ENCODE measurements at regions of chr10 and their contacts with region 1.

Region 1: GRCh38 chr10:46022978-46023702 is 7.3 kb downstream of the NCOA4 start:
- DNase-seq: peak; percentile 87 to 98 (median 92)
- ATAC-seq: peak; percentile 96
- H3K4me3 ChIP-seq: peak overlapping the region; percentile 62
- H3K27ac ChIP-seq: peak overlapping the region; percentile 79
- H3K4me1 ChIP-seq: peaks cover 31 to 72% of the 10 kb centered on the region in 2 experiments
- H3K27me3 ChIP-seq: no peaks in the 10 kb centered on the region
- CTCF ChIP-seq: peak; percentile 60 to 92 (median 83)
- EP300 ChIP-seq: 0 out of 2 replicates have a peak, but pooled peaks have one; percentile 8
- POLR2A ChIP-seq: peak; percentile 67
- RAD21 ChIP-seq: peak; percentile 77 to 86

Region 2: GRCh38 chr10:44589181-44589943 is 1433.8 kb before region 1 on chr10:
- CTCF ChIA-PET with region 1: no interaction called
- POLR2A ChIA-PET with region 1: no interaction called
- in situ Hi-C with region 1: no loop called
- intact Hi-C with region 1: no loop called
- DNase-seq: no peak
- ATAC-seq: no peak
- H3K4me3 ChIP-seq: no peak overlapping the region
- H3K27ac ChIP-seq: no peak overlapping the region
- H3K4me1 ChIP-seq: no peaks in the 10 kb centered on the region
- H3K27me3 ChIP-seq: peaks cover 0 to 49% of the 10 kb centered on the region in 2 experiments; a peak in 3 of 5 replicates
- CTCF ChIP-seq: no peak; a peak in 1 of 6 replicates
- EP300 ChIP-seq: no peak
- POLR2A ChIP-seq: no peak
- RAD21 ChIP-seq: no peak

Region 3: DNA sequence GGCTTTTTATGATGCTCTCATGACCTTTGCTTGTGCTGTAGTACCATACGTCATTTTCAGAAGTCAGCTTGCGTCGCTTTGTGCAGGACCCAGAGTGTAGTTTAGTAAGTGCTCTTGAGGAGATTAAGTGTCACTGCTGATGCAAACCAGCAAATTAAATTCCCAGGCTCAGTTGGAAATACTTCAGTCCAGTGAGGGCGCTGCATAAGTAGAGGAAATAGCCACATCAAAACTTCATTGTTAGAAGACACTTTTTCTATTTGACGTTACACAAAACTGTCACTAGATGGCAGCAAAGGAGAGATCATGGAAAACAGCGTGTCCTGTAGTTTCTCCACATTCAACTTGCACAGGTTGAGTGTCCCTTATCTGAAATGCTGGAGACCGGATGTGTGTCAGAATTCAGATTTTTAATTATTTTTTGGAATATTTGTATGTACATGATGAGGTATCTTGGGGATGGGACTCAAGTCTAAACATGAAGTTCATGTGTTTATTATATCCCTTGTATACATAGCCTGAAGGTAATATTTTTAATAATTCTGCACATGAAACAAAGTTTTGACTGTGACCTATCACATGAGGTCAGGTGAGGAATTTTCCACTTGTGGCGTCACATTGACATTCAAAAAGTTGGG is 1014.5 kb before region 1 on chr10:
- CTCF ChIA-PET with region 1: no interaction called
- POLR2A ChIA-PET with region 1: interaction called, 3 read pairs
- in situ Hi-C with region 1: no loop called
- intact Hi-C with region 1: loop called (anchors 5 kb)
- DNase-seq: peak; percentile 68 to 87 (median 72)
- ATAC-seq: peak; percentile 95
- H3K4me3 ChIP-seq: no peak overlapping the region
- H3K27ac ChIP-seq: no peak overlapping the region
- H3K4me1 ChIP-seq: 0 out of 5 replicates have a peak, but pooled peaks cover 0 to 2% of the 10 kb centered on the region in 2 experiments
- H3K27me3 ChIP-seq: no peaks in the 10 kb centered on the region
- CTCF ChIP-seq: peak; percentile 90 to 99 (median 93)
- EP300 ChIP-seq: 0 out of 2 replicates have a peak, but pooled peaks have one; percentile 20
- POLR2A ChIP-seq: no peak
- RAD21 ChIP-seq: peak; percentile 93 to 95

Region 4: DNA sequence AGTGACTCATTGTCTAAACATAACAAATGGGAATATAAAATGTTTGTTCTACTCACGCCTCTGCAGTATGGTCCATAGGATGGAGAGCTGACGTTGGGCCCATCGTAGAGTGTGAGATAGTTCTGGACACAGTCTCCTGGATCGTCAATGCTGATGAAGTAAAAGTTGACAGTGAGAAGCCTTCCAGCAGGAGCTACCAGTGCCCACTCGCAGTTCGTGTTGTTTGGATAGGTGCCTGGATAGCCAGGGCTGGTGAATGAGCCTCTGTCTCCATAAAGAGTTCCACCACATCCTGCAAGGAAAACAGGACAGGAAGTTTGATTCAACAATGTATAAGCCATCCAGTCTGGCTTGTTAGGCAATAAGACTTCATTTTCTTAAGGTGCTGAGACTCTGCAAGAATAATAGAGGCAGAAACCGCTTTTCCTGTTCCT is 787.3 kb before region 1 on chr10:
- CTCF ChIA-PET with region 1: interaction called, 3 read pairs
- POLR2A ChIA-PET with region 1: no interaction called
- in situ Hi-C with region 1: no loop called
- intact Hi-C with region 1: loop called (anchors 5 kb)
- DNase-seq: no peak
- ATAC-seq: peak; percentile 23
- H3K4me3 ChIP-seq: no peak overlapping the region
- H3K27ac ChIP-seq: no peak overlapping the region
- H3K4me1 ChIP-seq: peaks cover 0 to 3% of the 10 kb centered on the region in 2 experiments; a peak in 2 of 5 replicates
- H3K27me3 ChIP-seq: no peaks in the 10 kb centered on the region
- CTCF ChIP-seq: no peak
- EP300 ChIP-seq: no peak
- POLR2A ChIP-seq: no peak
- RAD21 ChIP-seq: no peak

Region 5: DNA sequence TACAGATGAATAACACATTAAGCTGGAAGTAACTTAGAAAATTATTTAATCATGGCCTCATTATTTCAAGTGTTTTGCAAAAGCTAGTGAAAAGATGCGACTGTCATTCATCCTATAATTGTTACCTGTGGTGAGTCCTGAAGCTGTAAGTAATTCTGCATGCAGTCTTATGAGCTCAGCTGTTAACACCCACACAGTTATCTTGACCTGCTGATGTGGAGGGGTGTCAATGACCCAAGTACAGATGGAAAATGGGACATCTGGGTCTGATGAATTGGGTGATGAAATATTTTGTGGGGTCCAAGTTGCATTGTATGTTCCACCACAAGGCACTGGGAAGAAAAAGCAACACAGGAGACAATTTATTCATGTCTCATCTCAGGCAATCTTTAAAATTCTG is 776.6 kb before region 1 on chr10:
- CTCF ChIA-PET with region 1: no interaction called
- POLR2A ChIA-PET with region 1: no interaction called
- in situ Hi-C with region 1: no loop called
- intact Hi-C with region 1: no loop called
- DNase-seq: no peak
- ATAC-seq: no peak
- H3K4me3 ChIP-seq: no peak overlapping the region
- H3K27ac ChIP-seq: no peak overlapping the region
- H3K4me1 ChIP-seq: peaks cover 5 to 6% of the 10 kb centered on the region in 2 experiments; a peak in 3 of 5 replicates
- H3K27me3 ChIP-seq: no peaks in the 10 kb centered on the region; a peak in 1 of 5 replicates
- CTCF ChIP-seq: no peak
- EP300 ChIP-seq: no peak
- POLR2A ChIP-seq: no peak
- RAD21 ChIP-seq: no peak

Region 6: GRCh38 chr10:45809837-45810236 is 213.3 kb before region 1 on chr10:
- CTCF ChIA-PET with region 1: no interaction called
- POLR2A ChIA-PET with region 1: no interaction called
- in situ Hi-C with region 1: no loop called
- intact Hi-C with region 1: loop called (anchors 5 kb)
- DNase-seq: peak in 2 of 4 experiments; percentile 17 to 26
- ATAC-seq: peak; percentile 67
- H3K4me3 ChIP-seq: no peak overlapping the region
- H3K27ac ChIP-seq: no peak overlapping the region
- H3K4me1 ChIP-seq: peaks cover 0 to 2% of the 10 kb centered on the region in 2 experiments; a peak in 2 of 5 replicates
- H3K27me3 ChIP-seq: no peaks in the 10 kb centered on the region
- CTCF ChIP-seq: peak; percentile 27 to 54 (median 36); a peak in 4 of 6 replicates
- EP300 ChIP-seq: no peak
- POLR2A ChIP-seq: no peak
- RAD21 ChIP-seq: peak; percentile 33 to 74; a peak in 3 of 4 replicates

Region 7: GRCh38 chr10:46006219-46006618 is 16.9 kb before region 1 on chr10:
- CTCF ChIA-PET with region 1: no interaction called
- POLR2A ChIA-PET with region 1: interaction called, 136 read pairs
- in situ Hi-C with region 1: no loop called
- intact Hi-C with region 1: loop called (anchors 1 kb)
- DNase-seq: peak in 1 of 4 experiments; percentile 55
- ATAC-seq: peak; percentile 12; the same call in 2 of the 3 replicates
- H3K4me3 ChIP-seq: no peak overlapping the region
- H3K27ac ChIP-seq: peak overlapping the region; percentile 34
- H3K4me1 ChIP-seq: peaks cover 12 to 27% of the 10 kb centered on the region in 2 experiments; a peak in 4 of 5 replicates
- H3K27me3 ChIP-seq: no peaks in the 10 kb centered on the region
- CTCF ChIP-seq: no peak
- EP300 ChIP-seq: no peak
- POLR2A ChIP-seq: no peak
- RAD21 ChIP-seq: no peak

Region 8: DNA sequence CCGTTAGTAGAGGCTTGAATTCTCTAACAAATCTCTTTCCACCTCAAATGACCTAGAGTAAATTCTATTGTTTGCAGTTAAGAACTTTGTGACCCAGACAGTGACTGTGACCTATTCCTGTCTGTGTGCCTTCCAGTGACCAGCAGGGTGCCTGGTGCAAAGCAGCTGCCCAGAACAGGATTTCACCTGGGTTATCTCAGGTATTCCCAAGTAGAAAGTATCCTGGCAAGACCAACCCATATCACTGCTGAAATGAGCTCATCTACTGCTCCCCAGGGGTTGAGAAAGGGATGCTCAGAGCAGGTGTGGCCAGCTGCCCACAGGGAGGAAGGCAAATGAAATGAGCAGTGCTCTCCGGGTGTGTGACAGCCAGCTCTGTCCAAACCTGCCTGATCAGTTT is 25.0 kb after region 1 on chr10:
- CTCF ChIA-PET with region 1: no interaction called
- POLR2A ChIA-PET with region 1: interaction called, 11 read pairs
- in situ Hi-C with region 1: no loop called
- intact Hi-C with region 1: no loop called
- DNase-seq: no peak
- ATAC-seq: no peak
- H3K4me3 ChIP-seq: no peak overlapping the region
- H3K27ac ChIP-seq: no peak overlapping the region
- H3K4me1 ChIP-seq: peaks cover 0 to 8% of the 10 kb centered on the region in 2 experiments; a peak in 4 of 5 replicates
- H3K27me3 ChIP-seq: no peaks in the 10 kb centered on the region
- CTCF ChIP-seq: no peak
- EP300 ChIP-seq: no peak
- POLR2A ChIP-seq: no peak
- RAD21 ChIP-seq: no peak

Measured in K562 (cell line).